ENCODE measurements at regions of chr1 and their contacts with region 1.

Region 1: DNA sequence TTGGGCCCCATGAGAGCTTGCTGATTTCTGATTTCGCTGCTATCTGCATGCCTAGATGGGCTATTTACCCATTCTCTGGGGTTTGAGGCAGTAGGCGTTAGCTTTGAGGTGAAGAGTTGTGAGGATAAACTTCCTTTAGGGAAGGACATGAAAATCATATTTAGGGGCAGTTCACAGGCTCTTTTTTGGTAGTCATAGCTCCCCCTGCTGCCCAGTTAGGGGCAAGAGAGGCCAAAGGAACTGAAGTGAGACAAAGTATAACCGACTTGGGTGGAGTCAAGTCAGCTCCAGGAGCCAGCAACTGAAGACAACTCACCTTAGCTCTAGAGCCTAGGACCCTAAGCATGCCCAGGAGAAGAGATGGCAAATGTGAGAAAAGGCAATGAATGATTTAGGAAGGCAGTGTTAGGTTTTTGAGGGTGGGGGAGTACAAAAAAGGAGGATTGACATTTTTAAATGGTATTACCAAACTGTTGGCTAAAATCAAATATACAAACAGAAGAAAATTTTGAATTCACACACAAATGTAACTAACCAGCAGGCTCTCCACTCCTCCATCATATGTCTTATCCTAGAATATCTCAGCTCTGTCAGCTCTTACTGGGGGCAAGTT is 625.2 kb downstream of the LMO4 start:
- DNase-seq: peak; percentile 21 to 61 (median 28)
- ATAC-seq: peak; percentile 88
- H3K4me3 ChIP-seq: no peak overlapping the region
- H3K27ac ChIP-seq: no peak overlapping the region
- H3K4me1 ChIP-seq: no peaks in the 10 kb centered on the region
- H3K27me3 ChIP-seq: no peaks in the 10 kb centered on the region
- CTCF ChIP-seq: peak; percentile 49 to 71 (median 64)
- EP300 ChIP-seq: no peak
- POLR2A ChIP-seq: no peak
- RAD21 ChIP-seq: peak; percentile 72 to 73

Region 2: GRCh38 chr1:87497380-87498203 is 456.2 kb before region 1 on chr1:
- CTCF ChIA-PET with region 1: no interaction called
- POLR2A ChIA-PET with region 1: no interaction called
- in situ Hi-C with region 1: no loop called
- intact Hi-C with region 1: loop called (anchors 10 kb)
- DNase-seq: no peak
- ATAC-seq: no peak
- H3K4me3 ChIP-seq: no peak overlapping the region
- H3K27ac ChIP-seq: no peak overlapping the region
- H3K4me1 ChIP-seq: no peaks in the 10 kb centered on the region
- H3K27me3 ChIP-seq: no peaks in the 10 kb centered on the region
- CTCF ChIP-seq: no peak
- EP300 ChIP-seq: no peak
- POLR2A ChIP-seq: no peak
- RAD21 ChIP-seq: no peak

Region 3: DNA sequence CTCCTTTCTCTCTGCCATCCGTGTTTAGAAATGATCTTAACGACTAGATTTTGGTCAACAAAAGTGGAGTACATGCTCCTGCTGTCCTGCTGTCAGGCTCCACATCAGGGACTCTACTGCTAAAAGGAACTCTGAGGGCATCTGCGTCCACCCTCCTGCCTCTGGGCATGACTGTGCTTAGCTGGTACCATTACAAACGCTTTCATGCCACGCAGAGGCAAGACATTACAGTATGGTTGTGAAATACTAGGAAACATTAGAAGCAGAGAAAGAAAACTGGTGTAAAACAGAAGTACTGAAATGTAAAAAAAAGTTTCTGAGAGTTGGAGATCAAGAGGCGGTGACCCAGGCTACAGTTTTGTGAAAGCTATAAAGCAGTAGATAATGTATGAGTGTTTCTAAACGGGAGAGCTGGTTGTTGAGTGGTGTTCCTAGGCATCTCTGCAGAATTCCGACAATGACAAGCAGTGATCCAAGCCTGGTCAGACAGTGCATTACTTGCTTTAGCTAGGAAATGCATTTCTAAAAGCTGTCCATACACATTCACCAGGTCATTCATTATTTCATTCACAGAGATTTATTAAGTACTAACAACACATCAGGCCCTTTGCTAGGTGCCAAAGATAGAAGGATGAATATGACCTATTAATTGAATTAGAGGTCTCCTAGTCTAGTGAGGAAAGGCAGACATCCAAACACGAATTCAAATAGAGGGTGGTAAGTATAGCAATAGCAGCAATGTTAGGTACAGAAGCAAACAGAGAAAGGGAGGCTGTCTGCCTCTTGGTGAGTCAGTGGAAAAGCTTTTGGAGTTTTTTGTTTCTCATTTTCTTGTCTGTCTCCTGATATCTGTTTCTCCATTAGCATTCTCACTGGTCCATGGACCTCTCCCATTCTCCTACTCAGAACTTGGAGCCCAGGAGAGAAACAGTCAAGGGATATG is 223.3 kb before region 1 on chr1:
- CTCF ChIA-PET with region 1: no interaction called
- POLR2A ChIA-PET with region 1: no interaction called
- in situ Hi-C with region 1: no loop called
- intact Hi-C with region 1: no loop called
- DNase-seq: no peak
- ATAC-seq: no peak
- H3K4me3 ChIP-seq: no peak overlapping the region
- H3K27ac ChIP-seq: no peak overlapping the region
- H3K4me1 ChIP-seq: no peaks in the 10 kb centered on the region
- H3K27me3 ChIP-seq: no peaks in the 10 kb centered on the region
- CTCF ChIP-seq: no peak
- EP300 ChIP-seq: no peak
- POLR2A ChIP-seq: no peak
- RAD21 ChIP-seq: no peak

Region 4: GRCh38 chr1:88061492-88062177 is 107.8 kb after region 1 on chr1:
- CTCF ChIA-PET with region 1: no interaction called
- POLR2A ChIA-PET with region 1: no interaction called
- in situ Hi-C with region 1: no loop called
- intact Hi-C with region 1: no loop called
- DNase-seq: peak in 2 of 4 experiments; percentile 4 to 5
- ATAC-seq: no peak
- H3K4me3 ChIP-seq: no peak overlapping the region
- H3K27ac ChIP-seq: no peak overlapping the region
- H3K4me1 ChIP-seq: no peaks in the 10 kb centered on the region
- H3K27me3 ChIP-seq: no peaks in the 10 kb centered on the region
- CTCF ChIP-seq: peak in 2 of 3 experiments; percentile 51 to 67; a peak in 4 of 6 replicates
- EP300 ChIP-seq: no peak
- POLR2A ChIP-seq: no peak
- RAD21 ChIP-seq: peak; percentile 31 to 41

Measured in K562 (cell line).